ENCODE measurements at regions of chr10 and their contacts with region 1.

Region 1: DNA sequence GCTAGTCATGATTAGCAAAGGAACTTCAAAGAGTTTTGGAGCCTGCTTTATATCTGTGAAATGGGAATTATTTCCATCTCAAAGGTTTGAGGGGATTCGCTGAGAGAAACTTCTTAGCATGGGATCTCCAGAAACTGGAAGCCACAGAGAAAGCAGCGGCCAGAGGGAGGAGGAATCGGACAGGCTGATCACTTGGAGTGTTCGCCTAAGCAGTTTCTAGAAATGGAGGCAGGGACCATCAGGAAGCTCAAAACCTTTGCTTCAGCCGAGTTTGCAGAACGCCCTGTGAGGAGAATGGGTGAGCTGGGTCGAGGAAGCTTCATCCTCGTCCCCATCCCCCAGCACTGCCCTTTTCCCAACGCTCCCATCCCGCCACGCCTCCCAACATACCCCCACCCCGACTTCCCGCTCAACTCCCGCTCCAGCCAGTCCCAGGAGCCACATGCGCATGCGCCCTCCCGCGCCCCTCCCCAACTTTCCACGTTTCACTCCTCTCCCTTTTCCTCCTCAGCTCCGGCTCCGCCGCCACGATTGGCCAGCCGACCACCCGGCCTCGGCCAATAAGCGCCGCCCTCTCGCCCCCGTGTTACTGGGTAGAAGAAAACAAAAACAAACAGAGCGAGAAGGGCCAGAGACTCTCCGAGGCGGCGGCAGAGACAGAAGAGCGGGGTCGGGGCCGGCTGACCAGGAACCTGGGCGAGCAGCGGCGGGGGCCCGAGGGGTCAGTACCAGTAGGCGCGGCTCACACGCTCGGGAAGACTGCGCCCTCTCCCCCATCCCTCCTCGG is at the start of gene PDCD4:
- DNase-seq: peak; percentile 94
- H3K4me3 Mint-ChIP-seq: peak within 1 kb of the TSS; percentile 96
- H3K27ac Mint-ChIP-seq: peak within 1 kb of the TSS; percentile 98
- H3K4me1 Mint-ChIP-seq: peaks cover 74% of the 10 kb centered on the region
- H3K27me3 Mint-ChIP-seq: no peaks in the 10 kb centered on the region
- total RNA-seq, gene PDCD4: 46.1 and 51.8 TPM in 2 replicates

Region 2: GRCh38 chr10:110803830-110804338 is 67.6 kb before region 1 on chr10:
- intact Hi-C with region 1: loop called (anchors 2 kb)
- DNase-seq: no peak
- H3K4me3 Mint-ChIP-seq: peak overlapping the region; percentile 56
- H3K27ac Mint-ChIP-seq: peak overlapping the region; percentile 51
- H3K4me1 Mint-ChIP-seq: peaks cover 41% of the 10 kb centered on the region
- H3K27me3 Mint-ChIP-seq: no peaks in the 10 kb centered on the region

Region 3: DNA sequence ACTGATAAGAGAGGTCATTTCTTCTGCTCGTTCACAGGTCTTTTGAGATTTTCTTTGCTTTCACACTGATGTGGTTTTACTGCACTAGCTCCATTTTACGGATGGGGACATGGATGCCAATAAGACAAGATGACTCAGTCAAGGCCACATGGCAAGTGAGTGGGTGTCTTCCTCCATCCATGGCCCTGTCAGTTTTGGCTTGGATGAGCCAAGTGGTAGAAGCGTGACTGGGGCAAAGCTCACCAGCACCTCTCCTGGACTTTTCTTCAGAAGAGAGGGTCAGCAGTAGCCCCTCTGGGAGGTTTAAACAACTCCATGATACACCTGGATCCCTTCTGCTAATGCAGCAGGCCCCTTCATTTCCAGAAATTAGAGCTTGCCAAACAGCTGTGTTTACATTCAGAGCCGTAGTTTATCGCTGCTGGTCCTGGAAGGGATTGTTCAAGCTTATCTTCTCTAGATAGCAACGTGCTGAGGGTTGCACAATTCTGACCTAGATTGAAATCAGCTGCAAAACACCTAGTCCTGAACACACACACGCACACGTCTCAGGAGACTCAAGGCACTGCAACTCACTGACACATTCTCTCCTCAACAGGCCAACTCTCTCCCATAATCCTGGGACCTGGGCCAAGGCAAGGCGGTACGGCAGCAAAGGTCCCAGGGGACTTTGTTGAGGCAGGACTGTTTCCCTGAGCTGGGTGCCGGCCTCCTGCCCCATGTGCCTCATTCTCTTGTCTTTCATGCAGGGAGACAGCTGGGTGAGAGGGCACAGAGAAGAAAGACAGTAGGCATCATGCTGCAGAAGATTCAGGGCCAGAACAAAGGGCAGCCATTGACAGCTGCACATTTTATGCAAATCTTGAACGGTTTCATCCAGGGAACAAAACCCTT is 14.0 kb before region 1 on chr10:
- intact Hi-C with region 1: loop called (anchors 2 kb)
- DNase-seq: no peak
- H3K4me3 Mint-ChIP-seq: peak overlapping the region; percentile 21
- H3K27ac Mint-ChIP-seq: peak overlapping the region; percentile 60
- H3K4me1 Mint-ChIP-seq: peaks cover 74% of the 10 kb centered on the region
- H3K27me3 Mint-ChIP-seq: no peaks in the 10 kb centered on the region

Region 4: DNA sequence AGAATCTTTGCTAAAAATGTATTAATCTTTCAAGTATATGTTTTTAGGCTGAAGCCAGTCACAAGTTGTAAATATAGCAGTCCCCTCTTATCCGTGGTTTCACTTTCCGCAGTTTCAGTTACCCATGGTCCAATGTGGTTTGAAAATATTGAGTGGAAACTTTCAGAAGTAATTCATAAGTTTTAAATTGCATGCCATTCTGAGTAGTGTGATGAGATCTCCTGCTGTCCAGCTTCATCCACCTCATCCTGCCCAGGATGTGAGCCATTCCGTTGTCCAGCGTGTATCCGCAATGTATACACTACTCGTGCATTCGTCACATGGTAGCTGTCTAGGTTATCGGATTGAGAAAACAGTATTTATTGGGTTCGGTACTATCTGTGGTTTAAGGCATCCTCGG is 12.4 kb after region 1 on chr10:
- intact Hi-C with region 1: loop called (anchors 1 kb)
- DNase-seq: no peak
- H3K4me3 Mint-ChIP-seq: peak overlapping the region; percentile 54
- H3K27ac Mint-ChIP-seq: peak overlapping the region; percentile 50
- H3K4me1 Mint-ChIP-seq: peaks cover 53% of the 10 kb centered on the region
- H3K27me3 Mint-ChIP-seq: no peaks in the 10 kb centered on the region

Region 5: GRCh38 chr10:110893559-110894179 is 22.2 kb after region 1 on chr10:
- intact Hi-C with region 1: loop called (anchors 1 kb)
- DNase-seq: no peak
- H3K4me3 Mint-ChIP-seq: no peak overlapping the region
- H3K27ac Mint-ChIP-seq: no peak overlapping the region
- H3K4me1 Mint-ChIP-seq: peaks cover 6% of the 10 kb centered on the region
- H3K27me3 Mint-ChIP-seq: no peaks in the 10 kb centered on the region